ENCODE measurements at regions of chr4 and their contacts with region 1.

Region 1: DNA sequence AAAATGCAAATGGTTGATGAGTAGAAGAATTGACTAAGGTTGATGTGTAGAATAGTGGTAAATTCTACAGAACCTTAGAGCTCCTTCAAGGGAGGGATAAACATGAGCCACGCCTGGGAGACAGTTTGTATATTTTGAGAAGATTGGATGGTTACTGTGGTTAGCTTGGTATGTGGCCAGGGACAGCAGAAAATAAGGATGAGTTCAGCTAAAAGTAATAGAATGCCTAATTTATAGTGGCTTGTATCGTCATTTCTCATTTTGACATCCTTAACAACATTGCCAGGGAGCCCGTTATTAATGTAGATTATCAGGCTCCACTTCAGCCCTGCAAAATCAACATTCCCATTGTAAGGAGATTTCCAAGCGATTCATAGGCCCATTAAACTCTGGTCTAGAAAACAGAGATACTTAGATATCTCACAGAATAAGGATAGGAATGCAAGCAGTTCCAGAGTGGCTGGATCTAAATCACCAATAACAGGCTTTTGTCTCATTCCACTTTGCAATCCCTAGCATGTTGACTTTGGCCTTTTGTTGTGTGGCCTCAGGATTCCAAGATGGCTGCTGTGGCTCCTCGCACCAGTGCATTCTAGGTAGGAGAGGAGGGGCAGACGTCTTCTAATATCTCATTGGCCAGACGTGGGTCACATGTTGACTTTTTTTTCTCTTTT is 6.4 kb upstream of the PTTG2 start:
- DNase-seq: no peak
- H3K4me3 Mint-ChIP-seq: no peak overlapping the region
- H3K27ac Mint-ChIP-seq: no peak overlapping the region
- H3K4me1 Mint-ChIP-seq: peaks cover 9% of the 10 kb centered on the region
- H3K27me3 Mint-ChIP-seq: no peaks in the 10 kb centered on the region

Region 2: GRCh38 chr4:37909332-37910090 is 44.2 kb before region 1 on chr4:
- CTCF ChIA-PET with region 1: interaction called, 6 read pairs
- intact Hi-C with region 1: loop called (anchors 5 kb)
- DNase-seq: no peak
- H3K4me3 Mint-ChIP-seq: no peak overlapping the region
- H3K27ac Mint-ChIP-seq: no peak overlapping the region
- H3K4me1 Mint-ChIP-seq: peaks cover 35% of the 10 kb centered on the region
- H3K27me3 Mint-ChIP-seq: no peaks in the 10 kb centered on the region

Region 3: DNA sequence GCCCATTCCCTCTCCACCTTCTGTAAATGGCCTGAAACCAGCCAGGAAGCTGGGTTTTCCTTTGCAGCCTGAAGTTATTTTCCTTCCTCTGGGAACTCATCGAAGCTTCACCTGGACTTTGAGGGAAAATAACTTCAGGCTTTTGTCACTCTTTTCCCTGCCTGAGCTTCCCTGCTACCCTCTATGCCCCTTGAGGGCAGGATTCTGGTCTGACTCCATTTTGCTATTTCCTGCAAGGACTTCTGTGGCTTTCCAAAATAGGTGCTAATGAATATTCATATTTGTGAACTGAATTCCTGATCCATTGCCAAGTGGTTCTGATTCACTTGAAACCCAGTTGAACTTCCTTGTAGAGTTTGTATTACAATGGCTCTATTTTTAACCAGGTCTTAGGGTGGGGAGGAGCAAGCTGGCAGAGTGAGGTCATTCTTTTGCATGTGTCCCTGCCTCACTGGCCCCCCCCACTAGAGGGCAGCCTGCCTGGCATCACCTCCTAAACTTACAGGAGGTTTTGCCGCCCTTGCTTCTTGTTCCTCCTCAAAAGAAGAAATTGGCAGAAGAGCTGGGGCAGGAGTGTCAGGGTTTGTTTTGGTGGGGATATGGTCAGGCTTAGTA is 16.8 kb after region 1 on chr4:
- CTCF ChIA-PET with region 1: no interaction called
- intact Hi-C with region 1: loop called (anchors 2 kb)
- DNase-seq: peak; percentile 58
- H3K4me3 Mint-ChIP-seq: no peak overlapping the region
- H3K27ac Mint-ChIP-seq: no peak overlapping the region
- H3K4me1 Mint-ChIP-seq: peaks cover 14% of the 10 kb centered on the region
- H3K27me3 Mint-ChIP-seq: no peaks in the 10 kb centered on the region

Measured in activated naive CD4-positive, alpha-beta T cell treated with anti-CD3 and anti-CD28 coated beads for 36 hours (primary cell).